Caco-2 (cell line): ENCODE measurements at regions of chr3 and their contacts with region 1.

Region 1: GRCh38 chr3:195744437-195744836 is 23.7 kb downstream of the MUC20 start:
- DNase-seq: no peak
- H3K4me3 ChIP-seq: no peak overlapping the region
- H3K4me3 Mint-ChIP-seq: no peak overlapping the region
- H3K27ac Mint-ChIP-seq: no peak overlapping the region
- H3K4me1 ChIP-seq: no peaks in the 10 kb centered on the region
- H3K4me1 Mint-ChIP-seq: peaks cover 7% of the 10 kb centered on the region
- H3K27me3 ChIP-seq: no peaks in the 10 kb centered on the region
- H3K27me3 Mint-ChIP-seq: peaks cover 2% of the 10 kb centered on the region
- CTCF ChIP-seq: no peak

Region 2: GRCh38 chr3:195729476-195730251 is 14.8 kb before region 1 on chr3:
- CTCF ChIA-PET with region 1: no interaction called
- POLR2A ChIA-PET with region 1: no interaction called
- intact Hi-C with region 1: loop called (anchors 1 kb)
- DNase-seq: no peak
- H3K4me3 ChIP-seq: no peak overlapping the region
- H3K4me3 Mint-ChIP-seq: no peak overlapping the region
- H3K27ac Mint-ChIP-seq: no peak overlapping the region
- H3K4me1 ChIP-seq: 0 out of 2 replicates have a peak, but pooled peaks cover 4% of the 10 kb centered on the region
- H3K4me1 Mint-ChIP-seq: no peaks in the 10 kb centered on the region
- H3K27me3 ChIP-seq: no peaks in the 10 kb centered on the region
- H3K27me3 Mint-ChIP-seq: no peaks in the 10 kb centered on the region
- CTCF ChIP-seq: no peak

Region 3: GRCh38 chr3:195829897-195830254 is 85.4 kb after region 1 on chr3:
- CTCF ChIA-PET with region 1: no interaction called
- POLR2A ChIA-PET with region 1: no interaction called
- intact Hi-C with region 1: no loop called
- DNase-seq: no peak
- H3K4me3 ChIP-seq: no peak overlapping the region
- H3K4me3 Mint-ChIP-seq: no peak overlapping the region
- H3K27ac Mint-ChIP-seq: no peak overlapping the region
- H3K4me1 ChIP-seq: no peaks in the 10 kb centered on the region
- H3K4me1 Mint-ChIP-seq: no peaks in the 10 kb centered on the region
- H3K27me3 ChIP-seq: no peaks in the 10 kb centered on the region
- H3K27me3 Mint-ChIP-seq: no peaks in the 10 kb centered on the region
- CTCF ChIP-seq: no peak